Body of pancreas (tissue), 4 donors: ENCODE measurements at regions of chr6 and their contacts with region 1.

Region 1: DNA sequence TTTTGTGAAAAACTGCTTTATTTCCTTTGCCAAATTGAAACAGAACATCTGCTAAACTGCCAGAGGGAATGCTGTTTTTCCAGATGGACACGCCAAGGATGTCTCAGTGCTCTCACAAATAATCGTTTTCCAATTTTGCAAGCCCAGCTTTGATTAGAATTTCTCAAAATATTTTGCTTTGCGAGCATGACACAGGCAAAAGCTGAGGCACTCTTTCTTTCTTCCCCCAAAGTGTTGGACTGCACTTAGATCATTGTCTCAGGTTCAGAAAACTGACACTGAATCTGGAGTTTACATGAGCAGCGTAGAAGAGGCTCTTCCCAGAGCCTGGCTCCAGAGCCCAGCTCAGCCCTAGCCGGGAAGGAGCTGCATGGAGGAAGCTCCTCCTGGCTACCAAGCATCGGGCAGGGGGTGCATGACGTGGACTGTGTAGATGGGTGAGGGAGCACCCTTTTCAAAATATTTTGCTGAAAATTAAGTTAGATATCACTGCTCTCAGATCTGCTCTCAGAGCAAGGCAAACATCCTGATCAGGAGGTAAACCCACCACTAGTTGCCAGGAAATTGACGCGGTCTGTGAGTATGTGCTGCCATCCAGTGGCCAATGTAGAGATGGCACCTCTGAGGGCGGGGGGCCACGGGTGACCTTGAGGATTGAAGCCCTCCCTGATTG is 107.5 kb downstream of the SLC22A3 start:
- DNase-seq: peak; percentile 47 to 65 (median 54)
- ATAC-seq: peak; percentile 87
- H3K4me3 ChIP-seq: no peak overlapping the region
- H3K27ac ChIP-seq: no peak overlapping the region
- H3K4me1 ChIP-seq: peaks cover 7% of the 10 kb centered on the region
- H3K27me3 ChIP-seq: no peaks in the 10 kb centered on the region
- CTCF ChIP-seq: peak; percentile 93 to 99 (median 97)
- POLR2A ChIP-seq: no peak

Region 2: GRCh38 chr6:159862103-159862502 is 593.6 kb before region 1 on chr6:
- intact Hi-C with region 1: loop called (anchors 10 kb)
- DNase-seq: no peak
- ATAC-seq: no peak
- H3K4me3 ChIP-seq: no peak overlapping the region
- H3K27ac ChIP-seq: no peak overlapping the region
- H3K4me1 ChIP-seq: no peaks in the 10 kb centered on the region
- H3K27me3 ChIP-seq: no peaks in the 10 kb centered on the region
- CTCF ChIP-seq: no peak
- POLR2A ChIP-seq: no peak

Region 3: DNA sequence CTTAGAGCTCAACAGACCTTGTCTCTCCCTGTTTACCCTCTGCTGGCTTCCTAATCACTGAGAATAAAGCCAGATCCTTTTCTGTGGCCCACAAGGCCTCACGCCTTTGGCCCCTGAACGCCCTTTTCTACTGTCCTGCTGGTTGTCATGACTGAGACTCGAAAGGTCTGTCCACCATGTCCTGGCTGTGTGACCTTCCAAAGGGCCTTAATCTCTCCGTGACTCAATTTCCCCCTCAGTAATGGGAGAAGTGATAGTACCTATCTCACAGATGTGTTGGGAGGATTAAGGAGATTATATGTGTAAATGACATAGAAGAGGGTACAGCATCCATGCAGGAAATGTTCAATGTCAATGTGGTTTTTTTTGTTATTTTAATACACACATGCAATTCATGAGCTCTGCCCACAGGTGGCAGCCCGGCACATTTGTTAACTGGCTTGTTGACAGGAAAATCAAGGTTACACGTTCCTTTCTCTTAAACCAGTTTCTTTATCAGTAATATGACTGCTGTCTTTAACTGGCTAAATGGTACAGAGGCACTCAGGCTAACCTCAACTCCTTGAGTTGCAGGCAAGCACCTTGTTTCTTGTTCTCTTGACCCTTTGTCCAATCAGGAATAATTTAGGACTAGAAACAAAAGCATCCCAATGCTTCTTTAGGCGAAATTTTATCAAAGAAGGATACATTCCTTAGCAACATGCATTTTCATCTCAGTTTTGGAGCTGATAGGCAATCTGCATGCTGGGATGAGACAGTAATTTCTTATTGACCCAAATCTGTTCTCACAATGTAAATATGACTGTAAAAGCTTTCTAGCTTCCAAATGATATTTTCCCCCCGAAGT is 317.5 kb before region 1 on chr6:
- intact Hi-C with region 1: loop called (anchors 10 kb)
- DNase-seq: peak; percentile 67 to 76 (median 70)
- ATAC-seq: peak; percentile 86
- H3K4me3 ChIP-seq: no peak overlapping the region
- H3K27ac ChIP-seq: peak overlapping the region in 2 of 4 donors; percentile 3 to 23
- H3K4me1 ChIP-seq: peaks cover 25% of the 10 kb centered on the region
- H3K27me3 ChIP-seq: no peaks in the 10 kb centered on the region
- CTCF ChIP-seq: peak; percentile 72 to 90 (median 84)
- POLR2A ChIP-seq: no peak

Region 4: DNA sequence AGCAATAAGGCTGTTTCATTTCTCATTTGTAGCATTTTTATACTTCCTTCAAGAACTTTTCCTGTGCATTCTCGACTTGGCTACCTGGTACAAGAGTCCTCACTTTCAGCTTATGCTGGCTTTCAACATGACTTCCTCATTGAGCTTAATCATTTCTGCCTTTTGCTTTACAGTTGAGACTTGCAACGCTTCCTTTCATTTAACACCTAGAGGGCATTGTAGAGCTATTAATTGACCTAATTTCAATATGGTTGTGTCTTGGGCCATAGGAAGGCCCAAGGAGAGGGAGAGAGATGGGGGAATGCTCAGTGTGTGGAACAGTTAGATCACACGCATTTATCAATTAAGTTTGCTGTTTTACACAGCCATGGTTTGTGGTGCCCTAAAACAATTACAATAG is 234.3 kb before region 1 on chr6:
- intact Hi-C with region 1: loop called (anchors 10 kb)
- DNase-seq: peak in 1 of 4 donors; percentile 2
- ATAC-seq: peak; percentile 58
- H3K4me3 ChIP-seq: no peak overlapping the region
- H3K27ac ChIP-seq: no peak overlapping the region
- H3K4me1 ChIP-seq: peaks cover 3% of the 10 kb centered on the region
- H3K27me3 ChIP-seq: no peaks in the 10 kb centered on the region
- CTCF ChIP-seq: peak in 4 of 7 experiments; percentile 40 to 72 (median 56)
- POLR2A ChIP-seq: no peak

Region 5: GRCh38 chr6:161694995-161695394 is 1239.3 kb after region 1 on chr6:
- intact Hi-C with region 1: no loop called
- DNase-seq: peak in 3 of 4 donors; percentile 23 to 35 (median 24)
- ATAC-seq: peak; percentile 55
- H3K4me3 ChIP-seq: no peak overlapping the region
- H3K27ac ChIP-seq: no peak overlapping the region
- H3K4me1 ChIP-seq: peaks cover 9% of the 10 kb centered on the region
- H3K27me3 ChIP-seq: no peaks in the 10 kb centered on the region
- CTCF ChIP-seq: peak; percentile 25 to 64 (median 55)
- POLR2A ChIP-seq: no peak